HEK293 (cell line): ENCODE measurements at regions of chr5 and their contacts with region 1.

Region 1: GRCh38 chr5:72030237-72030636 is 77.0 kb upstream of the MAP1B start:
- H3K4me3 ChIP-seq: no peak overlapping the region
- H3K27ac ChIP-seq: no peak overlapping the region
- H3K4me1 ChIP-seq: 0 out of 2 replicates have a peak, but pooled peaks cover 2% of the 10 kb centered on the region
- CTCF ChIP-seq: no peak

Region 2: DNA sequence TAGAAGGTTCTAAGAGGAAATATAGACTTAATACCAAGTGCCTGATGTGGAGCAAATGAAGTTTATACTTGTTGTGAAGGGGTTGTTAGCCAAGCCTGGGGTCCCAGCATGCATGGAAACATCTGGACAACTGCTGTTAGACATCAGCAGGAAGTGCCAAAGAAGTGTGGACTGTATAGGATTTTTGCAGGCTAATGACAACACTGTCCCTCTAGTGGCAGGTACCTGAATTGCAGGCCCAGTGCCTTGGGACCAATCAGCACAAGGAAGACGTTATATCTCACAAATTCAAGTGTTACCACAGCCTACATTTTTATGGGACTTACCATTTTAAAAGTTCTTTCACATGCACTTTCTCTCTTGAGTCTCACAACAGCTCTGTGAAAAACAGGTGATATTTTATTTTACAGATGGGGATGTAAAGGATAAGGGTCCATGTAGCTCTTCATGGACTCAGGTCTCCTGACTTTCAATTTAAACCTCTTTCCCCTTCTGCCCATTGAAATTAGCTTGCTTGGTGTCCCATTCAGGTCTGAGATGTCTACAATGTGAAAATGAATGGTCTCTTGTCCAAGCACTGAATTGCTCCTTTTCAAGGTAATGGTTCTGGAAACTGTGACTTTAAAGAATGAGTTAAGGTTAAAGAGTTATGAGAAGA is 12.0 kb before region 1 on chr5:
- CTCF ChIA-PET with region 1: interaction called, 13 read pairs
- POLR2A ChIA-PET with region 1: no interaction called
- H3K4me3 ChIP-seq: no peak overlapping the region
- H3K27ac ChIP-seq: no peak overlapping the region
- H3K4me1 ChIP-seq: no peaks in the 10 kb centered on the region
- CTCF ChIP-seq: peak; percentile 44; the same call in 1 of the 2 replicates